ENCODE measurements at regions of chr9 and their contacts with region 1.

Region 1: DNA sequence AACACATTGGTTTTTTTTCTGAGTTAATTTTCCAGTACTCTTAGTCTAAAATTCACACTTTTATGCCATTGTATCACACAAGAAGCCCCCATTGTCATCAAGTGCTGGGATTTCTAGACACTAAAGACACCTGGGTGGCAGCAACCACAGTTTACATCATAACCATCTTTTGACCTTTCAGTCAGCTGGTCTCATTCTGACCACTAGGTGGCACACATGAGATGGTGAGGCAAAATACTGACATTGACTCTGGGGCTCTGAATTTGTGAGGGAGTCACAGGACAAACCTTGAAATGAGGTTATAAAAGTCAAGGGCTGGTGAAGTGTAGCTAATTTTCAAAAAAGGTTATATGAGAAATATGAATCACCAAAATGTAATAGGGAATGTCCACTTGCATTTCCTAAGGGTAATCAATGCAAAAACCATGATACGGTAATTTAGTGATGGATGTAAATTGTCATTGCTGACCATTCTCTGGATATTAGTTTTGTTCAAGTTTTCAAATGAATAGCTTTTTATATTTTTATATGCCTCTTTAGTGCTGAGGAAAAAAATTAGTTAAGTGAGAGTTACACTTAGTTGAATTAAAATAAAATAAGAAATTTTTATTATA is 229.4 kb downstream of the DMAC1 start:
- DNase-seq: peak; percentile 42 to 77 (median 66)
- ATAC-seq: peak; percentile 56
- H3K4me3 ChIP-seq: no peak overlapping the region
- H3K4me3 Mint-ChIP-seq: no peak overlapping the region
- H3K27ac ChIP-seq: no peak overlapping the region
- H3K27ac Mint-ChIP-seq: no peak overlapping the region
- H3K4me1 ChIP-seq: no peaks in the 10 kb centered on the region
- H3K4me1 Mint-ChIP-seq: peaks cover 2% of the 10 kb centered on the region
- H3K27me3 ChIP-seq: no peaks in the 10 kb centered on the region
- H3K27me3 Mint-ChIP-seq: peaks cover 8% of the 10 kb centered on the region
- CTCF ChIP-seq: peak; percentile 89

Region 2: GRCh38 chr9:7055201-7055903 is 514.9 kb before region 1 on chr9:
- CTCF ChIA-PET with region 1: no interaction called
- POLR2A ChIA-PET with region 1: no interaction called
- intact Hi-C with region 1: no loop called
- DNase-seq: no peak
- ATAC-seq: no peak
- H3K4me3 ChIP-seq: no peak overlapping the region
- H3K4me3 Mint-ChIP-seq: no peak overlapping the region
- H3K27ac ChIP-seq: no peak overlapping the region
- H3K27ac Mint-ChIP-seq: peak overlapping the region; percentile 32
- H3K4me1 ChIP-seq: no peaks in the 10 kb centered on the region
- H3K4me1 Mint-ChIP-seq: no peaks in the 10 kb centered on the region
- H3K27me3 ChIP-seq: no peaks in the 10 kb centered on the region
- H3K27me3 Mint-ChIP-seq: no peaks in the 10 kb centered on the region
- CTCF ChIP-seq: no peak

Region 3: DNA sequence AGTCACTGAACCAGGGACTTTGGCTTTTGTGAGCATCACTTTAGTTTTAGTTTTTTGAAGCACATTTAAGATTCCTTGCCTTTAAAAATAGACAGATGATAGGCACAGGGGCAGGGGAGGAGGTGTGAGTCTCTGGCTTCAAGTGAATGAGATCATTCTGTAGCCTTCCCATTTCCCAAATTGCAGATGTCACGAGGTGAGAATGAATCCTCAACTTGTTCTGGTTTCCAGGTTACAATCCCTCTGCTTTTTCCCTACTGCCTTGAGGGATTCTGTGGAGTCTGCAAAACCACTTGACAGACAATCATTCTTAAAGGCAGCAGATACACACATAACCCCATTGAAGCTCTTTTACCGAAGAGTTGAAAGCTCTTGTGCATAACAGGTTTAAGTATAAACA is 103.0 kb before region 1 on chr9:
- CTCF ChIA-PET with region 1: no interaction called
- POLR2A ChIA-PET with region 1: no interaction called
- intact Hi-C with region 1: no loop called
- DNase-seq: no peak
- ATAC-seq: no peak
- H3K4me3 ChIP-seq: no peak overlapping the region
- H3K4me3 Mint-ChIP-seq: no peak overlapping the region
- H3K27ac ChIP-seq: no peak overlapping the region
- H3K27ac Mint-ChIP-seq: no peak overlapping the region
- H3K4me1 ChIP-seq: no peaks in the 10 kb centered on the region
- H3K4me1 Mint-ChIP-seq: no peaks in the 10 kb centered on the region
- H3K27me3 ChIP-seq: no peaks in the 10 kb centered on the region
- H3K27me3 Mint-ChIP-seq: peaks cover 3% of the 10 kb centered on the region
- CTCF ChIP-seq: no peak

Region 4: GRCh38 chr9:7613931-7614330 is 43.7 kb after region 1 on chr9:
- CTCF ChIA-PET with region 1: interaction called, 22 read pairs
- POLR2A ChIA-PET with region 1: no interaction called
- intact Hi-C with region 1: loop called in 1 of 2 experiments (anchors 1 kb)
- DNase-seq: peak in 2 of 9 experiments; percentile 40 to 59
- ATAC-seq: peak; percentile 71
- H3K4me3 ChIP-seq: no peak overlapping the region
- H3K4me3 Mint-ChIP-seq: peak overlapping the region; percentile 69
- H3K27ac ChIP-seq: no peak overlapping the region
- H3K27ac Mint-ChIP-seq: peak overlapping the region; percentile 80
- H3K4me1 ChIP-seq: peaks cover 27% of the 10 kb centered on the region
- H3K4me1 Mint-ChIP-seq: peaks cover 33% of the 10 kb centered on the region
- H3K27me3 ChIP-seq: no peaks in the 10 kb centered on the region
- H3K27me3 Mint-ChIP-seq: no peaks in the 10 kb centered on the region
- CTCF ChIP-seq: no peak

Region 5: DNA sequence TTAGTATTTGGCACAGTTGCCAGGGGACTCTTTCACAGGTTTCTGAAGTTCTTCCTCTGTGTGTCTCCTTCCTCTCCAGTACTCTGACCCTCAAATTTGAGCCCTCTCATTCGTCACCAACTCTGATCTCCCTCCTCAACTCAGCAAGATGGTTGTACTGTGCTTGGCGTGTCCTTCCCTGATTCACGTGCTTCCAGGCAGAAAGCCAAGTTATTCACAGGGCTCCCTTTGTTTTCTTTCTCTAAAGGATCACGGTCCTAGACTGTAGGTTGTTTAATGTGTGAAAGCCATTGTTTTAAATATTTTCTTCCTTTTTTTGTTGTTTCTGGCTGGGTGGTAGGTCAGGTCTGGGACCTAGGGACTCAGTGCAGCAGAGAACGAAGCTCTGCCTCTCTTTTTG is 86.4 kb after region 1 on chr9:
- CTCF ChIA-PET with region 1: interaction called, 20 read pairs
- POLR2A ChIA-PET with region 1: interaction called, 5 read pairs
- intact Hi-C with region 1: loop called in 1 of 2 experiments (anchors 1 kb)
- DNase-seq: no peak
- ATAC-seq: no peak
- H3K4me3 ChIP-seq: no peak overlapping the region
- H3K4me3 Mint-ChIP-seq: no peak overlapping the region
- H3K27ac ChIP-seq: no peak overlapping the region
- H3K27ac Mint-ChIP-seq: no peak overlapping the region
- H3K4me1 ChIP-seq: no peaks in the 10 kb centered on the region
- H3K4me1 Mint-ChIP-seq: peaks cover 5% of the 10 kb centered on the region
- H3K27me3 ChIP-seq: no peaks in the 10 kb centered on the region
- H3K27me3 Mint-ChIP-seq: no peaks in the 10 kb centered on the region
- CTCF ChIP-seq: no peak

Region 6: GRCh38 chr9:7756088-7756487 is 185.9 kb after region 1 on chr9:
- CTCF ChIA-PET with region 1: no interaction called
- POLR2A ChIA-PET with region 1: no interaction called
- intact Hi-C with region 1: no loop called
- DNase-seq: peak in 2 of 9 experiments; percentile 9 to 33
- ATAC-seq: peak; percentile 62
- H3K4me3 ChIP-seq: no peak overlapping the region
- H3K4me3 Mint-ChIP-seq: no peak overlapping the region
- H3K27ac ChIP-seq: no peak overlapping the region
- H3K27ac Mint-ChIP-seq: no peak overlapping the region
- H3K4me1 ChIP-seq: no peaks in the 10 kb centered on the region
- H3K4me1 Mint-ChIP-seq: peaks cover 7% of the 10 kb centered on the region
- H3K27me3 ChIP-seq: no peaks in the 10 kb centered on the region
- H3K27me3 Mint-ChIP-seq: no peaks in the 10 kb centered on the region
- CTCF ChIP-seq: no peak

Region 7: DNA sequence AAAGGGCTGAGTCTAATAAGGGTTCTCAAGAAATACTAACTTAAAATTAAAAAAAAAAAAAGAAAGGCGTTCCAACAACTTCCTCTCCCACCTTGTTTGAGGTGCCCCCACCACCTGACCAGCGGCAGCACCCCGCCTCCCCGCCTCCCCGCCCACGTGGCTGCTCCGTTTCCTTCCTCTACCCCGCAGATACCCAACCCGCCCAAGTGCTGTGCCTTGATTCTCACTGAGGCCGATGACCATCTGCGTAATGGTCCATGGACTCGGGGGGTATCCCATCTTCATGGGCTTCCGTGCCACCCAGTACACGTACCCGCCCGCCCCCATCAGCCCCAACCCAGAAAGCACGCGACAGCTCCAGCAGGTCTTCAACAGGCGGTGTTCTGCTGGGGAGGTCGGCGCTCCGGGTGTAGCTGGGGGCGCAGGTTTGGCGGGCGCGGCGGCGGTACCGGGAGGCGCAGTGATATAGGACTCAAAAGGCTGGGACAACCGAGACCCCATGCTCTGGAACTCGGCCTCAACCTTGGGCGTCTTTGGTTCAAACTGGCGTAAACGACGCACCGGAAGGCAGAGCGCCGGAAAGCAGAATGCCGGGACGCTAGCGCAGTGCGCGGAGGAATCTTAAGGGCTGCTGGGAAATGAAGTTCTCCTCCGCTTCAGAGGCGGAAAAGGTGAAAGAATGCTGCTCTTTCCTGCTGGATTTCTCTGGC is 229.2 kb after region 1 on chr9 and contains the start of gene DMAC1:
- CTCF ChIA-PET with region 1: no interaction called
- POLR2A ChIA-PET with region 1: interaction called, 3 read pairs
- intact Hi-C with region 1: loop called in 1 of 2 experiments (anchors 5 kb)
- DNase-seq: peak; percentile 44 to 87 (median 75)
- ATAC-seq: peak; percentile 90
- H3K4me3 ChIP-seq: peak within 1 kb of the TSS; percentile 89 to 100
- H3K4me3 Mint-ChIP-seq: peak within 1 kb of the TSS; percentile 95
- H3K27ac ChIP-seq: peak within 1 kb of the TSS; percentile 88 to 89
- H3K27ac Mint-ChIP-seq: peak within 1 kb of the TSS; percentile 97
- H3K4me1 ChIP-seq: peaks cover 16% of the 10 kb centered on the region
- H3K4me1 Mint-ChIP-seq: peaks cover 40% of the 10 kb centered on the region
- H3K27me3 ChIP-seq: no peaks in the 10 kb centered on the region
- H3K27me3 Mint-ChIP-seq: no peaks in the 10 kb centered on the region
- CTCF ChIP-seq: no peak
- total RNA-seq, gene DMAC1: 8.6 to 10.6 TPM

Region 8: GRCh38 chr9:8179381-8180053 is 609.3 kb after region 1 on chr9:
- CTCF ChIA-PET with region 1: no interaction called
- POLR2A ChIA-PET with region 1: no interaction called
- intact Hi-C with region 1: loop called (anchors 5 to 10 kb)
- DNase-seq: no peak
- ATAC-seq: no peak
- H3K4me3 ChIP-seq: no peak overlapping the region
- H3K4me3 Mint-ChIP-seq: no peak overlapping the region
- H3K27ac ChIP-seq: no peak overlapping the region
- H3K27ac Mint-ChIP-seq: no peak overlapping the region
- H3K4me1 ChIP-seq: no peaks in the 10 kb centered on the region
- H3K4me1 Mint-ChIP-seq: no peaks in the 10 kb centered on the region
- H3K27me3 ChIP-seq: no peaks in the 10 kb centered on the region
- H3K27me3 Mint-ChIP-seq: no peaks in the 10 kb centered on the region
- CTCF ChIP-seq: no peak

Region 9: DNA sequence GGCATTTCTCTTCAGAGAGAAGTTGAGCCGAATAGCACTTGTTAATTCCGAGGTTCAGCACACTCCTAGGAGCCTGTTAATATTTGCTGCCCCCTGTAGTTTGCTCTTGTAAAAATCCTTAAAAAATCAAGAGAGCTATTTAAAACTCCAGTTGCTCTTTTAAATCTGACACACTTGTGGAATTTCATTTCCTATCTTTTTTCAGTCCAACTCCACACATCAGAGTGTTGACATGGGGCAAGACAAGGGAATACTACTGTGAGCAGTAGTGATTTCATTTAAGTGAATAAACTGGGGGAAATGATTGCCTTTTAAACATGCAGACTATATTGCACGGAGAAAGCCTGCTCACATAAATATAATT is 1325.6 kb after region 1 on chr9:
- CTCF ChIA-PET with region 1: no interaction called
- POLR2A ChIA-PET with region 1: no interaction called
- intact Hi-C with region 1: loop called in 1 of 2 experiments (anchors 5 kb)
- DNase-seq: peak in 2 of 9 experiments; percentile 11 to 15
- ATAC-seq: no peak
- H3K4me3 ChIP-seq: no peak overlapping the region
- H3K4me3 Mint-ChIP-seq: no peak overlapping the region
- H3K27ac ChIP-seq: no peak overlapping the region
- H3K27ac Mint-ChIP-seq: no peak overlapping the region
- H3K4me1 ChIP-seq: no peaks in the 10 kb centered on the region
- H3K4me1 Mint-ChIP-seq: no peaks in the 10 kb centered on the region
- H3K27me3 ChIP-seq: no peaks in the 10 kb centered on the region
- H3K27me3 Mint-ChIP-seq: no peaks in the 10 kb centered on the region
- CTCF ChIP-seq: no peak